PC-3 (cell line): ENCODE measurements at regions of chr6 and their contacts with region 1.

Region 1: DNA sequence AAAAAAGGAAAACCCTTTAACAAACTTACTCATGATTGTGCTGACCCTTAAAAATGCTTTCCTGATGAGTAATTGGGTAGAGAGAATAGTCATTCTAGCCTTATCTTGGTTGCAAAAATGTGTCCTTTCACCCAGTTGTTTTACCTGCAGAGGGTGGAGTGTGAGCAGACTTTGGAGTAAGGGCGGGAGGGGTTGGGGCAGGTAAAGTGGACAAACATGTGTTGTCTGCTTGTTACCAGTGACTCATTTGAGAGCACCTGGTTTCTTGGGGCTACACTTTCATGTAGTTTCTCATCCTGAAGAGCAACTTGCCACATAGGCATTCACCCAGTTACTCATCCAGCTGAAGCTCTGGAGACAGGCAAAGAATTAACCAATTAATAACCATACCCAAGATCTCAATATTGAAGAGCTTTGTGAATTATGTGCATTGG is 121.1 kb downstream of the TNFRSF21 start:
- DNase-seq: peak; percentile 97
- ATAC-seq: peak; percentile 91
- H3K4me3 ChIP-seq: 0 out of 2 replicates have a peak overlapping the region, but pooled peaks have one; percentile 25
- H3K27ac ChIP-seq: peak overlapping the region; percentile 82
- H3K4me1 ChIP-seq: peaks cover 33% of the 10 kb centered on the region
- H3K27me3 ChIP-seq: no peaks in the 10 kb centered on the region
- CTCF ChIP-seq: no peak

Region 2: GRCh38 chr6:46828939-46829338 is 359.7 kb before region 1 on chr6:
- CTCF ChIA-PET with region 1: no interaction called
- POLR2A ChIA-PET with region 1: no interaction called
- intact Hi-C with region 1: no loop called
- DNase-seq: no peak
- ATAC-seq: no peak
- H3K4me3 ChIP-seq: no peak overlapping the region
- H3K27ac ChIP-seq: no peak overlapping the region
- H3K4me1 ChIP-seq: no peaks in the 10 kb centered on the region
- H3K27me3 ChIP-seq: no peaks in the 10 kb centered on the region
- CTCF ChIP-seq: no peak

Region 3: DNA sequence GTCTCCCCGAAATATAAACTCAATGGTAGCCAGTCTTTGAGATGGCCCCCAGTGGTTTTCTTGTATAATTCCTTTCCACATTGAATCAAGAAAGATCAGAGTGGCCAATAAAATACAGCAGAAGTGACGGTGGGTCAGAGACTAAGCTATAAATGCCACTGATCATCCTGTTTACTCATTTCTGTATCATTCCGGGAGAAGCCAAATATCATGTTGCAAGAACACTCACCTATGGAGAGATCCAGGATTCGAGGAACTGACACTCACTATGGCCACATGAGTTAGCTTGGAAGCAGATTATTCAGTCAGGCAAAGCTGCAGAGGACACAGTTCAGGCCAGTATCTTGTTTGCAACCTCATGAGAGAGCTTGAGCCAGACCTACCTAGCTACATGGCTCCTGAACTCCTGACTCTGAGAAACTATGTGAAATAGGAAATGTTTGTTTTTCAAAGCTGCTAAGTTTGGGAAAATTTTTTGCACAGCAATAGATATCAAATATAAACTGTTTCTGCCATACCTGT is 14.0 kb before region 1 on chr6:
- CTCF ChIA-PET with region 1: no interaction called
- POLR2A ChIA-PET with region 1: no interaction called
- intact Hi-C with region 1: loop called (anchors 2 kb)
- DNase-seq: peak; percentile 91
- ATAC-seq: peak; percentile 95
- H3K4me3 ChIP-seq: no peak overlapping the region
- H3K27ac ChIP-seq: peak overlapping the region; percentile 75
- H3K4me1 ChIP-seq: peaks cover 42% of the 10 kb centered on the region
- H3K27me3 ChIP-seq: no peaks in the 10 kb centered on the region
- CTCF ChIP-seq: no peak

Region 4: GRCh38 chr6:47242483-47243386 is 54.1 kb after region 1 on chr6:
- CTCF ChIA-PET with region 1: no interaction called
- POLR2A ChIA-PET with region 1: no interaction called
- intact Hi-C with region 1: loop called (anchors 10 kb)
- DNase-seq: peak; percentile 87
- ATAC-seq: peak; percentile 95
- H3K4me3 ChIP-seq: no peak overlapping the region
- H3K27ac ChIP-seq: peak overlapping the region; percentile 63
- H3K4me1 ChIP-seq: peaks cover 17% of the 10 kb centered on the region
- H3K27me3 ChIP-seq: no peaks in the 10 kb centered on the region
- CTCF ChIP-seq: no peak

Region 5: DNA sequence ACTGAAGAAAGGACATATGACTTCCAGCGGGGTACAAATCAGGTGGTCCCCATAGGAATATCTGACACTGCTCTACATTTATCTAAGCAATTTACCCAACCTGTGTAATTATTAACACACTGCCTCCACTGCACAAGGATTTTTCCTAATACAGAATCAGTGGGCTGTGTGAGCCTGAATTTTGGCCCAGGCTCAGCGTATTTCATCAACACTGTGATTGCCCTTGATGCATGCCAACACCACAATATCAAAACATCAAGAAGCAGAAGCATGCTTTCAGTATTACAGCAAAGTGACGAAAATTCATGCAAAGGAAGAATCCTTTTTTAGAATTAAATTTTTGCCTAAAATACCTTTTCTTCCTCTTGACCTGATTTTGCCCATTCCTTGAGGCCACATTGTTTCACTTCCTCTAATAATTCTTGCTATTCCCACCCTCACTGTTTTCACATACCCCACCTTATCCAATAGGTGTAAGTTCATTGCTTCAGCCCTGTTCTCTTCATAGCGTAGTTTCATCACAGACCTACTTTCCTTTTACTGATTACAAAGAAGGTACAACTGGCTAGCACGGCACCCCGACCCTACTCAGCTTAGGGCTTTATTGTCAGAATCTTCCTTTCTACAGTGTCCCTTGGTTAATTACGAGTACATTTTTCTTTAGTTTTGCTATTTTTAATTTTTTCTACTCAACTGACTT is 1006.1 kb after region 1 on chr6:
- CTCF ChIA-PET with region 1: no interaction called
- POLR2A ChIA-PET with region 1: no interaction called
- intact Hi-C with region 1: no loop called
- DNase-seq: no peak
- ATAC-seq: no peak
- H3K4me3 ChIP-seq: no peak overlapping the region
- H3K27ac ChIP-seq: no peak overlapping the region
- H3K4me1 ChIP-seq: peaks cover 11% of the 10 kb centered on the region; the same call in 1 of the 2 replicates
- H3K27me3 ChIP-seq: no peaks in the 10 kb centered on the region
- CTCF ChIP-seq: no peak